T-cell (primary cell): ENCODE measurements at regions of chr2 and their contacts with region 1.

Region 1: DNA sequence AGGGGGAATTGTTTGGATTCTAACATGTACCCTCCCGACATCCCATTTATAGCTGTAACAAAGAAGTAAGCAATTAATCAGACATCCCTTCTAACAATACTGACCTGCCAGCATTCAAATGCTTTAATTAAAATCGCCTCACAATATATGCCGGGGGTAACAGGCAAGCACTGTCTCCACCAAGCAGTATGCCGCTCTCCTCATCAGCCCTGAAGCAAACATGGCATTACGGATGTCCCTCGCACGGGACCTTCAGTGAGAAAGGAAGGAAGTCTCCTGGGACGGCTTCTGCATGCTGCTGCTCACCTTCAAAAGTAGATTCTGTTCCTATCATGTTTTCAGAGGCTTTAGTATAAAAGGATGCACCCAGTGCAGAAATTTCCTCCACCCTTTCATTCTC is 292.7 kb upstream of the POU3F3 start:
- DNase-seq: no peak
- ATAC-seq: no peak
- H3K4me3 ChIP-seq: no peak overlapping the region
- H3K4me3 Mint-ChIP-seq: no peak overlapping the region
- H3K27ac ChIP-seq: no peak overlapping the region
- H3K27ac Mint-ChIP-seq: no peak overlapping the region
- H3K4me1 ChIP-seq: no peaks in the 10 kb centered on the region
- H3K4me1 Mint-ChIP-seq: no peaks in the 10 kb centered on the region
- H3K27me3 ChIP-seq: peaks cover 0 to 3% of the 10 kb centered on the region in 2 experiments
- H3K27me3 Mint-ChIP-seq: peaks cover 0 to 2% of the 10 kb centered on the region in 2 donors

Region 2: DNA sequence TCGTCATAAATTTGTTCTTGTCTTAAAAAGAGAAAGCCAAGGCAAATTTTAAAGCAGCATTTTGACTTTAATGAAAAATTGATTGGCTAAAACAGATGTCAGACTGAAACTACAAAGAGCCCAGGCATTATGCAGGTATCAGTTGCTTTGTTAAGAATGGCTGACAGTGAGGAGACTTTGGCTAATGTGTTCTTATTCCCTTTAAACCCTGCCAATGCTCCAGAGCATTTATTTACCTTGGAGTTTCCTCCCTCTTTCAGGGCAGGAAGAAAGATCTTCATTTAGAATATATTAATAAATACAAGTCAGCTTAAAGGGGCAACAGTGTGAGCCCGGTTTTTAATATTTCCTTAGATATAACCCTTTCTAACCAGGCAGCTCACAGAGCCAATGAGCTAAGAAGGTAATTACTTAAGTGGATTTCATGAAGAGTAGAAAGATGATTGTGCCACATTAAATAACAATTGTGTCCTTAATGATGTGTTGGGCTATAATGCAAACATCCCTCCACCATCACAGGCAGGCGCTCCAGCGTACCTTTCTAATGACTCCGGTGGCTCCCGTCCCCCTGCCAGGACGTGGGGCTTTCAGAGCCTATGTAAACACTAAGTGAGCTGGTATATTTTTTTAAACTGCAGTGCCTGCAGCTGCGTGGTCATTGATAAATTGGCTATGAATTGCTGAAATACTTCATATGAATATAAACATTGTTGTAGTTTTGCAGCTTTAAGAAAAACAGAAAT is 56.7 kb before region 1 on chr2:
- CTCF ChIA-PET with region 1: no interaction called
- POLR2A ChIA-PET with region 1: interaction called in 1 of 2 experiments, 14 read pairs
- DNase-seq: no peak
- ATAC-seq: no peak
- H3K4me3 ChIP-seq: no peak overlapping the region
- H3K4me3 Mint-ChIP-seq: no peak overlapping the region
- H3K27ac ChIP-seq: no peak overlapping the region
- H3K27ac Mint-ChIP-seq: no peak overlapping the region
- H3K4me1 ChIP-seq: no peaks in the 10 kb centered on the region
- H3K4me1 Mint-ChIP-seq: no peaks in the 10 kb centered on the region
- H3K27me3 ChIP-seq: no peaks in the 10 kb centered on the region
- H3K27me3 Mint-ChIP-seq: peaks cover 0 to 2% of the 10 kb centered on the region in 2 donors

Region 3: GRCh38 chr2:104572834-104573233 is 11.6 kb after region 1 on chr2:
- CTCF ChIA-PET with region 1: interaction called in 1 of 2 experiments, 13 read pairs
- POLR2A ChIA-PET with region 1: no interaction called
- DNase-seq: peak in 2 of 35 experiments; percentile 0 to 2
- ATAC-seq: no peak
- H3K4me3 ChIP-seq: no peak overlapping the region
- H3K4me3 Mint-ChIP-seq: no peak overlapping the region
- H3K27ac ChIP-seq: no peak overlapping the region
- H3K27ac Mint-ChIP-seq: no peak overlapping the region
- H3K4me1 ChIP-seq: no peaks in the 10 kb centered on the region
- H3K4me1 Mint-ChIP-seq: no peaks in the 10 kb centered on the region
- H3K27me3 ChIP-seq: no peaks in the 10 kb centered on the region
- H3K27me3 Mint-ChIP-seq: no peaks in the 10 kb centered on the region

Region 4: GRCh38 chr2:104849618-104850141 is 288.4 kb after region 1 on chr2:
- CTCF ChIA-PET with region 1: no interaction called
- POLR2A ChIA-PET with region 1: no interaction called
- DNase-seq: peak in 23 of 35 experiments; percentile 18 to 65 (median 42)
- ATAC-seq: no peak
- H3K4me3 ChIP-seq: no peak overlapping the region
- H3K4me3 Mint-ChIP-seq: no peak overlapping the region
- H3K27ac ChIP-seq: no peak overlapping the region
- H3K27ac Mint-ChIP-seq: peak overlapping the region in 1 of 2 donors; percentile 32
- H3K4me1 ChIP-seq: peaks cover 15 to 34% of the 10 kb centered on the region in 2 experiments
- H3K4me1 Mint-ChIP-seq: peaks cover 31 to 56% (median 34%) of the 10 kb centered on the region in 3 donors
- H3K27me3 ChIP-seq: peaks cover 38 to 67% of the 10 kb centered on the region in 2 experiments
- H3K27me3 Mint-ChIP-seq: peaks cover 88 to 89% of the 10 kb centered on the region in 2 donors